B cell (primary cell): ENCODE measurements at regions of chr15 and their contacts with region 1.

Region 1: GRCh38 chr15:75758071-75758872 is 45.6 kb upstream of the CSPG4 start:
- DNase-seq: peak; percentile 82
- ATAC-seq: peak; percentile 95
- H3K4me3 ChIP-seq: peak overlapping the region; percentile 21 to 86 (median 75)
- H3K4me3 Mint-ChIP-seq: peak overlapping the region; percentile 94
- H3K27ac ChIP-seq: peak overlapping the region; percentile 80 to 85
- H3K27ac Mint-ChIP-seq: peak overlapping the region; percentile 91
- H3K4me1 ChIP-seq: peaks cover 6 to 10% of the 10 kb centered on the region in 2 donors
- H3K4me1 Mint-ChIP-seq: peaks cover 20% of the 10 kb centered on the region
- H3K27me3 ChIP-seq: no peaks in the 10 kb centered on the region
- H3K27me3 Mint-ChIP-seq: no peaks in the 10 kb centered on the region
- CTCF ChIP-seq: no peak

Region 2: DNA sequence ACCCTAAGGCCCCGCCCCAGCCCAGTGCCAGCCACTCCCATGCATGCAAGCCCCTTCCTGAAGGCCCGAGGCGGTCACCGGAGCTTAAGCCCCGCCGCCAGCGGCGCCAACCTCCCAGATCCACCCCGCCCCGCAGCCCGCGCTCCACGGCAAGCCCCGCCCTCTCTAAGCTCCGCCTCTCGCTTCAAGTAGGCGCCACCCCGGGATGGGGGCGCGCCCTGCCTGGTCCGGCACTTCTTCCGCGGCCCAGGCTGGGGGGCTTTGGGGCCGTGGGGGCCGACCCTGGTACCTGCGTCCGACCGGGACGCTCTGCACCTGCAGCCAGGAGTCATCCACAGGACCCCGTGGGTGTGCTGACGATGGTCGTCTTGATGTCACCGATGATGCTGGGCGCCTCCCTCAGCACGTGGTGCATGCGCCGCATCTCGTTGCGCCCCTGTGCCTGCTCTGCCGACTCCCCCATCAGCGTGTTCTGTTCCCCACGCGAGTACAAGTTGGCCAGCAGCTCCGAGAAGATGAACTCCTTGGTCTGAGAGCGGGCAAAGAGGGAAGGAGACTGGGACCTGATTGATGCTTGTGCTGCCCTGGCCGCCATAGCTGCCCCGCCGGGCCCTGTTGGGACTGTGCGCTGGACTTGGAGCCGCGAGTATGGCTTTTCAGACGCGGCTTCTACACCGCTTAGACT is 19.5 kb before region 1 on chr15:
- CTCF ChIA-PET with region 1: interaction called, 4 read pairs
- POLR2A ChIA-PET with region 1: no interaction called
- intact Hi-C with region 1: loop called (anchors 1 kb)
- DNase-seq: peak; percentile 95
- ATAC-seq: peak; percentile 98
- H3K4me3 ChIP-seq: peak overlapping the region in 4 of 5 experiments; percentile 77 to 86 (median 82)
- H3K4me3 Mint-ChIP-seq: peak overlapping the region; percentile 90
- H3K27ac ChIP-seq: peak overlapping the region; percentile 54 to 72
- H3K27ac Mint-ChIP-seq: peak overlapping the region; percentile 67
- H3K4me1 ChIP-seq: peaks cover 6 to 17% of the 10 kb centered on the region in 2 donors
- H3K4me1 Mint-ChIP-seq: peaks cover 14% of the 10 kb centered on the region
- H3K27me3 ChIP-seq: peaks cover 0 to 7% (median 0%) of the 10 kb centered on the region in 4 experiments
- H3K27me3 Mint-ChIP-seq: peaks cover 11% of the 10 kb centered on the region
- CTCF ChIP-seq: no peak

Region 3: GRCh38 chr15:75842722-75843551 is 84.7 kb after region 1 on chr15 and contains the start of gene UBE2Q2:
- CTCF ChIA-PET with region 1: no interaction called
- POLR2A ChIA-PET with region 1: no interaction called
- intact Hi-C with region 1: loop called (anchors 5 kb)
- DNase-seq: peak; percentile 83
- ATAC-seq: peak; percentile 63
- H3K4me3 ChIP-seq: peak within 1 kb of the TSS; percentile 66 to 86 (median 83)
- H3K4me3 Mint-ChIP-seq: peak within 1 kb of the TSS; percentile 94
- H3K27ac ChIP-seq: peak within 1 kb of the TSS; percentile 65 to 68
- H3K27ac Mint-ChIP-seq: peak within 1 kb of the TSS; percentile 95
- H3K4me1 ChIP-seq: peaks cover 18 to 21% of the 10 kb centered on the region in 2 donors
- H3K4me1 Mint-ChIP-seq: peaks cover 36% of the 10 kb centered on the region
- H3K27me3 ChIP-seq: no peaks in the 10 kb centered on the region
- H3K27me3 Mint-ChIP-seq: no peaks in the 10 kb centered on the region
- CTCF ChIP-seq: no peak
- total RNA-seq, gene UBE2Q2: 31.2 and 33.6 TPM in 2 replicates

Region 4: DNA sequence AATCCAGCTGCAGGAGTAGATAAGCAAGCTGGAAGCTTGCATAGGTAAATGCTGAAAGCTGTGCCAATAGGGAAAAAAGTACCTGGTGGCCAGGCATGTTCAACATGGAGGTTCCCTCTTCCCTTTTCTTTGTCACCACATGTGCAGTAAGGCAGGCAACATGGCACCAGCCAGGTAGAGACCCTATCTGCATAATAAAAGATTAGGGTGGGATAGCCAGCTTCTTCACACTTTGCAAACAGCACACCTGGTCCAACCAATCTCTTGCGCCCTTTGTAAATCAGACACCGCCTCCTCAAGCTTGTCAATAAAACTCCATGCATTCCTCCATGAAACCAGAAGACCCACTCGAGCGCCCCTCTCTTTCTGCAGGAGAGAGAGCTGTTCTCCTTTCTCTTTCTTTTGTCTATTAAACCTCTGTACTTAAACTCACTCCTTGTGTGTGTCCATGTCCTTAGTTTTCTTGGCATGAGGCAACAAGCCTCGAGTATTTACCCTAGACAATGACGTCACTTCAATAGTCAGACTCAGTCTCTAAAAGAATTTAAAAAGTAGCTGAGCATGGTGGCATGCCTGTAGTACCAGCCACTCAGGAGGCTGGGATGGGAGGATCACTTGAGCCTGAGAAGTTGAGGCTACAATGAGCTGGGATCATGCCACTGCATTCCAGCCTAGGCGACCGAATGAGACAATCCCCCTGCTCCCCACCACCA is 890.6 kb after region 1 on chr15:
- CTCF ChIA-PET with region 1: no interaction called
- POLR2A ChIA-PET with region 1: no interaction called
- intact Hi-C with region 1: no loop called
- DNase-seq: no peak
- ATAC-seq: no peak
- H3K4me3 ChIP-seq: no peak overlapping the region
- H3K4me3 Mint-ChIP-seq: no peak overlapping the region
- H3K27ac ChIP-seq: no peak overlapping the region
- H3K27ac Mint-ChIP-seq: no peak overlapping the region
- H3K4me1 ChIP-seq: no peaks in the 10 kb centered on the region
- H3K4me1 Mint-ChIP-seq: peaks cover 3% of the 10 kb centered on the region
- H3K27me3 ChIP-seq: no peaks in the 10 kb centered on the region
- H3K27me3 Mint-ChIP-seq: no peaks in the 10 kb centered on the region
- CTCF ChIP-seq: no peak